ENCODE measurements at regions of chr4 and their contacts with region 1.

Region 1: DNA sequence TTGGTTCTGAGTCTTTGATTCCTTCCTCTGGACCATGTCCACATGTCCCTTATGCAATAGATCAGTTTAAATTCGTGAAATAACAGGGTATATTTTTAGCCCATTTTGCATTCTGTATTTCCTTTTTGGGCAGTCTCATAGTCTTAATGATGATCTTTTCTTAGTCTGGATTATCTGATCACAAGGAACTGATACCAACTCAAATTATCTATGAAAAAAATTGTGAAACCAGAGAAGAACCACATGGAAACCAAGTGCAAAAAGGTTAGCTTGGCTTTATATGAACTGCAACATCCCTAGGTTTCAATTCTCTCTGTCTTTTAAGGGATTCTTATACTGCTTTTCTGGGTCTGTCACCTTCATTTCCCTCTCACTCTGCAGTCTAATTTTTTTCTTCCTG is 608.6 kb upstream of the AADAT start:
- DNase-seq: peak; percentile 69
- ATAC-seq: peak; percentile 86
- H3K4me3 ChIP-seq: peak overlapping the region; percentile 44; the same call in 1 of the 2 replicates
- H3K27ac ChIP-seq: peak overlapping the region; percentile 78
- H3K4me1 ChIP-seq: peaks cover 6% of the 10 kb centered on the region
- H3K27me3 ChIP-seq: no peaks in the 10 kb centered on the region
- CTCF ChIP-seq: no peak
- EP300 ChIP-seq: peak; percentile 62 to 80; a peak in 3 of 4 replicates
- POLR2A ChIP-seq: no peak
- RAD21 ChIP-seq: no peak

Region 2: GRCh38 chr4:170623897-170624296 is 74.4 kb before region 1 on chr4:
- CTCF ChIA-PET with region 1: no interaction called
- POLR2A ChIA-PET with region 1: no interaction called
- RAD21 ChIA-PET with region 1: no interaction called
- SMC1A ChIA-PET with region 1: no interaction called
- in situ Hi-C with region 1: no loop called
- intact Hi-C with region 1: no loop called
- DNase-seq: no peak
- ATAC-seq: no peak
- H3K4me3 ChIP-seq: no peak overlapping the region
- H3K27ac ChIP-seq: no peak overlapping the region
- H3K4me1 ChIP-seq: no peaks in the 10 kb centered on the region
- H3K27me3 ChIP-seq: no peaks in the 10 kb centered on the region
- CTCF ChIP-seq: no peak
- EP300 ChIP-seq: no peak
- POLR2A ChIP-seq: no peak
- RAD21 ChIP-seq: no peak

Region 3: DNA sequence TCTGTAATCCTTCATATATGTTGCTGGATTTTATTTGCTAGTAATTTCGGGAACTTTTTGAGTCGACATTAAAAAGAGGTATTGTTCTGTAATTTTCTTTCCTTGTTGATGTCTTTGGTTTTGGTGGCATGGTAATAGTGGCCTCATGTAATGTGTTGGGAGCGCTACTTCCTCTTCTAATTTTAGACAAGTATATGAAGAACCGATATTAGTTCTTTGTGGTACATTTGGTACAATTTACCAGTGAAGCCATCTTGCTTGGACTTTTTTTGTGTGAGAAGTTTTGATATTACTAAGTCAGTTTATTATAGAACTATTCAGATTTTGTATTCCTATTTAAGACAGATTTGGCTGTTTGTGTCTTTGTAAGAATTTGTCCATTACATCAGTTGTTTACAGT is 60.7 kb after region 1 on chr4:
- CTCF ChIA-PET with region 1: no interaction called
- POLR2A ChIA-PET with region 1: no interaction called
- RAD21 ChIA-PET with region 1: no interaction called
- SMC1A ChIA-PET with region 1: no interaction called
- in situ Hi-C with region 1: no loop called
- intact Hi-C with region 1: loop called (anchors 5 kb)
- DNase-seq: no peak
- ATAC-seq: peak; percentile 95
- H3K4me3 ChIP-seq: no peak overlapping the region
- H3K27ac ChIP-seq: no peak overlapping the region
- H3K4me1 ChIP-seq: no peaks in the 10 kb centered on the region
- H3K27me3 ChIP-seq: no peaks in the 10 kb centered on the region
- CTCF ChIP-seq: no peak
- EP300 ChIP-seq: no peak
- POLR2A ChIP-seq: no peak
- RAD21 ChIP-seq: no peak

Region 4: GRCh38 chr4:171186700-171187099 is 488.4 kb after region 1 on chr4:
- CTCF ChIA-PET with region 1: no interaction called
- POLR2A ChIA-PET with region 1: no interaction called
- RAD21 ChIA-PET with region 1: no interaction called
- SMC1A ChIA-PET with region 1: no interaction called
- in situ Hi-C with region 1: no loop called
- intact Hi-C with region 1: no loop called
- DNase-seq: no peak
- ATAC-seq: peak; percentile 67
- H3K4me3 ChIP-seq: no peak overlapping the region
- H3K27ac ChIP-seq: no peak overlapping the region
- H3K4me1 ChIP-seq: no peaks in the 10 kb centered on the region
- H3K27me3 ChIP-seq: no peaks in the 10 kb centered on the region
- CTCF ChIP-seq: no peak; a peak in 1 of 6 replicates
- EP300 ChIP-seq: no peak
- POLR2A ChIP-seq: no peak
- RAD21 ChIP-seq: 0 out of 2 replicates have a peak, but pooled peaks have one; percentile 17

Measured in GM12878 (cell line).